Left ventricle myocardium superior (tissue), 1 donor: ENCODE measurements at regions of chr13 and their contacts with region 1.

Region 1: DNA sequence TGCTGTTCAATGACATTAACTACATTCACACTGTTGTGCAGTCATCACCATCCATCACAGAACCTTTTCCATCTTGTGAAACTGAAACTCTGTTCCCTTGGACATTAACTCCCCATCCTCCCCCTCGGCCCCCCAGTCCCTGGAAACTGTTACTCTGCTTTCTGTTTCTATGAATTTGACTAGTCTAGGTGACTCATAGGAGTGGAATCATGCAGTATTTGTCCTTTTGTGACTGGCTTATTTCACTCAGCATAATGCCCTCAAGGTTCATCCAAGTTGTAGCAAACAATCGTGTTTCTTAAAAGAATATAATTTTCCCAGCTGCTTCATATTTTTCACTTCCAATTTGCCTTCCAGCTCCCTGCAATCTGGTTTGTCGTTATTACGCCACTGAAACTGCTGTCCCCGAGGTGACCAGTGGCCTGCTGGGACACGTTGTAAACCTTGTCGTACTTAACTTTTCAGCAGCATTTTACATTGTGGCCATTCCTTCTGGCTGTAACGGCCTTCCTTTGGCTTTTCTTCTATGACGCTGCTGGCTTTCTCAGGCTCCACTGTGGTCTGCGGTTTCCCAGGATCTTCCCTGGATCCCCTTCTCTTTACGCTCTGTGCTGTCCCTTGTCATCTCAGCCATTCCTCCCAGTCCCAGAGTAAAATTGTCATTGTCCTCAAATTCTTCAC is 74.0 kb downstream of the DHRS12 start:
- DNase-seq: peak; percentile 41
- ATAC-seq: peak; percentile 74

Region 2: DNA sequence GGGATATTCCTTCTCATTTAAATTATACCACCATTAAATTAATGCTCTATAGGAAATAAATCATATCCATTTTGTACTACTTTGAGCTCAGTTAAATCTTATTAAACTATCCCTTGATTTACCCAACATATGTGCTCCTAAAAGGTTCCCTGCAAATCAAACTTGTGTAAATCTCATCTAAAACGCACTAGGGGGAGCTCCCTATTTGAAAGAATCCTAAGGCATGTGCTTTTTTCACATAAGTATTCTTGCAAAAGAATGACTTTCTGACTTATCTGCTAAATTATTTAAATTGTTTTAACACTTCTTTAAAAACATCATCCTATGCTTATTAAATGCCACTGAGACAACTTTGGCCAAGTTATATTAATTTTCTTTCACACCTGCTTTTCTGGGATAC is 285.1 kb before region 1 on chr13:
- intact Hi-C with region 1: loop called (anchors 10 kb)
- DNase-seq: no peak
- ATAC-seq: no peak

Region 3: DNA sequence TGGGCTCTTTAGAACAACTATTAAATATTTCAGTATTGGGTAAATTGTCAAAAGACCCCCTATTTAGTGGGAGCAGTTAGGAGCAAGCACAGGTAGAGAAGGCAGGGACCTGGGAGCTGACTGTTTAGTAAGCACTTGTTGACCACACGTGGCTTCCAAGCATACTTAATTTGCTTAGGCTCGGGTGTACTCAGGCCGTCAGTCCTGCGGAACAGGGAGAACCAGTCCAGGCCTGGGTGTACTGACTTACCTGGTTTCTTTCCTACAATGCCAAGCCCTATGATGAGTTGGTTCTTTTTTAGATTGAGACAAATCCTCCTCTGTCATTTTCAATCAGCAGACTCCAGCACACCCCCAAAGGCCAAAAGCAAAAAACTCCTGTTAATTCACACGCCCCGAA is 55.7 kb before region 1 on chr13:
- intact Hi-C with region 1: loop called (anchors 10 kb)
- DNase-seq: no peak
- ATAC-seq: no peak